ENCODE measurements at regions of chr1 and their contacts with region 1.

Region 1: DNA sequence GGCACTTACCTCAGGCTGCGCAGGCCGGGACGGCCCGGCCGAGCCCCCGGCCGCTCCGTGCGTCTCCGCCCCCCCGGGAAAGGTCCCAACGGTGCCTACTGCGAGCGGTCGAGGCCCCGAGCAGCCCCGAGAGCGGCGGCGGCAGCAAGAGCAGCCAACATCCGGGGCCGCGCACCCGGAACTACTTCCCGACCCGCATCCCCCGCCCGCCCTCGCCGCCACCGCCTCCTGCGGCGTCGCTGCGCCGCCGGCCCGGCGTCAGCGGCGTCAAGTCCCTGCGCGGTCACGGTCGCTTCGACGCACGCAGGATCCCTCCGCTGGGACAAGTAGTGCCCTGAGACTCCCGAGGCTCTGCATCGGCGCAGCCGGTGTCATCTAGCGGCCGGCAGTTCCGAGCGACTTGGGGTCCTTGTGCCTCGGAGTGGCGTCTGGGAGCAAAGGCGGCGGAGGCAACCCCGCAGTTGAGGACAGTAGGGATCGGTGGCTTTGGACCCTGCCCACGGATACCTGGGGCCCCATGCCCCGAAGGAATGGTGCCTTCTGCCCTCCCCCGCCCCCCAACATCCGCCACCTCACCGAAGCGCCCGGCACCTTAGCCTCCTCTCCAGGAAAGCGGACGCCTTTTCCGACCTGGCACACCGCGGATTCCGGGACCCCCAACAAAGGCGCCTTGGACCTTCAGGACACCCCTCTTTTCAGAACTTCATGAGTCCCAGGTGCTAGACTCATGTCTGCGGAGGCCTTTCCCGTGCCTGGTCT is at the start of gene FOXJ3:
- DNase-seq: peak; percentile 98
- H3K4me3 ChIP-seq: peak within 1 kb of the TSS; percentile 88
- H3K27ac ChIP-seq: peak within 1 kb of the TSS; percentile 87
- H3K4me1 ChIP-seq: peaks cover 12% of the 10 kb centered on the region
- H3K27me3 ChIP-seq: no peaks in the 10 kb centered on the region
- CTCF ChIP-seq: no peak
- total RNA-seq, gene FOXJ3: 55.4 and 57.9 TPM in 2 replicates

Region 2: GRCh38 chr1:42173155-42173933 is 161.9 kb before region 1 on chr1:
- CTCF ChIA-PET with region 1: no interaction called
- POLR2A ChIA-PET with region 1: no interaction called
- intact Hi-C with region 1: loop called (anchors 10 kb)
- DNase-seq: peak; percentile 71
- H3K4me3 ChIP-seq: no peak overlapping the region
- H3K27ac ChIP-seq: no peak overlapping the region
- H3K4me1 ChIP-seq: peaks cover 4% of the 10 kb centered on the region
- H3K27me3 ChIP-seq: no peaks in the 10 kb centered on the region
- CTCF ChIP-seq: peak; percentile 99

Region 3: DNA sequence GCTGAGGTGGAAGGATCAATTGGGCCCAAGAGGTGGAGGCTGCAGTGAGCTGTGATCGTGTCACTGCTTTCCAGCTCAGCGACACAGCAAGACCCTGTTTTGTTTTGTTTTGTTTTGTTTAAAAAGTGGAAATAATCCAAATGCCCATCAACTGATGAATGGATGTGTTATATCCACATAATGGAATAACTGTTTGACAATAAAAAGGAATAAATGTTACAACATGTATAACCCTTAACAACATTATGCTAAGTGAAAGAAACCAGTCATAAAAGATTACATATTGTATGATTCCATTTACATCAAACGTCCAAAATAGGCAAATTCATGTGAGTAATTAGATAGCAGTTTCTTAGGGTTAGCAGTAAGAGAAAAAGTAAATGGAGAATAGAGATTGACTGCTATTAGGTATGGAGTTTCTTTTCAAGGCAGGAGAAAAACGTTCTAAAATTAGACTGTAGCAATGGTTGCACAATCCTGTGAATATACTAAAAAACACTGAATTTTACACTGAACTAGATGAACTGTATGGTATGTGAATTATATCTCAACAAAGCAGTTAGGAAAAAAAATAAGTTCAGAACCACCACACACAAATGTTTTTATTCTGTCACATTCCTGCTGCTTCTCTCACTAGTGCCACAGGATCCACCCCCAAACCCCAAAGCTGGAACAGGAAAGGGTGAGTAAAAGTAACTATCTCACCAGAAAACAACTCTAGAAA is 15.9 kb before region 1 on chr1:
- CTCF ChIA-PET with region 1: no interaction called
- POLR2A ChIA-PET with region 1: no interaction called
- intact Hi-C with region 1: no loop called
- DNase-seq: no peak
- H3K4me3 ChIP-seq: no peak overlapping the region
- H3K27ac ChIP-seq: peak overlapping the region; percentile 20
- H3K4me1 ChIP-seq: peaks cover 60% of the 10 kb centered on the region
- H3K27me3 ChIP-seq: no peaks in the 10 kb centered on the region
- CTCF ChIP-seq: no peak

Region 4: DNA sequence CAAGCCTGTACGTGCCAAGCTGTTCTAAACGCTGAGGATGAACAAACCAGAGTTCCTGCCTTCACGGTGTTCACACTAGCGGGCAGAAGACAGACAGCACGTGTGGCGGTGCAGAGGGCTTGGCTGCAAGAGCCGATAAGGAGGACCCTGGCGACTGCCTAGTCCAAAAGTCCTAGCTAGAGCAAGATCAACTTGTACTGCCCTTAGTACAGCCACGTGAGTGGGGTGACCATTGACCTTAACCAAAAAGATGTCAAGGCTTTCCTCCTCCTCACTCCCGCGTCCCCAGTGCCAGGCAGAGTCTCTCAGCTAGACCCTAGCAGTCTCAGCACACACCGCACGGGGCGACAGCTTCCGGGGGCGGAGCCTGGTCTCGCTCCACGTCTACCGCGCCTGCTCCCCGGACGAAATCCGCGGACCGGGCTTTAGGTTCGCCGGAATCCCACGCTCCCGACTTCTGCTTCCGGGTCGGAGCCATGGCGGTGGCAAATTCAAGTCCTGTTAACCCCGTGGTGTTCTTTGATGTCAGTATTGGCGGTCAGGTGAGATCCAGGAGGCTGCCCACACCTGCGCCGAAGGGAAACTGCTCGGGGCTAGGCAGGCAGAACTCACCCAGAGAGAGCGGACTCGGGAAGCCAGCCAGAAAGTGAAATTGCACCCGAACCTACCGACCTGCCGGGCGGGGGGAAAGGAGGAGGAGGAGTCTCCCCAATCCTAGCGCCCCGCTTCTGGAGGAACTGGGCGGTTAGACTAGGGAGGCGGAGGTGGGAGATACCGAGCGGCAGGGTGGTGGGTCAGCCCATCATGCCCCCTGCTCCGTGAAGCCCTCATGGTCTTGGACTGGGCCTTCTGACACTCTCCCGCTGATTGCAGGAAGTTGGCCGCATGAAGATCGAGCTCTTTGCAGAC is 323.0 kb after region 1 on chr1 and contains the start of gene PPIH:
- CTCF ChIA-PET with region 1: no interaction called
- POLR2A ChIA-PET with region 1: no interaction called
- intact Hi-C with region 1: loop called (anchors 10 kb)
- DNase-seq: peak; percentile 97
- H3K4me3 ChIP-seq: peak within 1 kb of the TSS; percentile 61
- H3K27ac ChIP-seq: peak within 1 kb of the TSS; percentile 77
- H3K4me1 ChIP-seq: peaks cover 13% of the 10 kb centered on the region
- H3K27me3 ChIP-seq: no peaks in the 10 kb centered on the region
- CTCF ChIP-seq: no peak
- total RNA-seq, gene PPIH: 75.9 and 79.0 TPM in 2 replicates

Region 5: GRCh38 chr1:42747125-42747524 is 411.9 kb after region 1 on chr1:
- CTCF ChIA-PET with region 1: no interaction called
- POLR2A ChIA-PET with region 1: no interaction called
- intact Hi-C with region 1: loop called (anchors 10 kb)
- DNase-seq: peak; percentile 61
- H3K4me3 ChIP-seq: no peak overlapping the region
- H3K27ac ChIP-seq: no peak overlapping the region
- H3K4me1 ChIP-seq: no peaks in the 10 kb centered on the region
- H3K27me3 ChIP-seq: no peaks in the 10 kb centered on the region
- CTCF ChIP-seq: peak; percentile 76

Measured in A673 (cell line).